ENCODE measurements at regions of chr1 and their contacts with region 1.

Region 1: DNA sequence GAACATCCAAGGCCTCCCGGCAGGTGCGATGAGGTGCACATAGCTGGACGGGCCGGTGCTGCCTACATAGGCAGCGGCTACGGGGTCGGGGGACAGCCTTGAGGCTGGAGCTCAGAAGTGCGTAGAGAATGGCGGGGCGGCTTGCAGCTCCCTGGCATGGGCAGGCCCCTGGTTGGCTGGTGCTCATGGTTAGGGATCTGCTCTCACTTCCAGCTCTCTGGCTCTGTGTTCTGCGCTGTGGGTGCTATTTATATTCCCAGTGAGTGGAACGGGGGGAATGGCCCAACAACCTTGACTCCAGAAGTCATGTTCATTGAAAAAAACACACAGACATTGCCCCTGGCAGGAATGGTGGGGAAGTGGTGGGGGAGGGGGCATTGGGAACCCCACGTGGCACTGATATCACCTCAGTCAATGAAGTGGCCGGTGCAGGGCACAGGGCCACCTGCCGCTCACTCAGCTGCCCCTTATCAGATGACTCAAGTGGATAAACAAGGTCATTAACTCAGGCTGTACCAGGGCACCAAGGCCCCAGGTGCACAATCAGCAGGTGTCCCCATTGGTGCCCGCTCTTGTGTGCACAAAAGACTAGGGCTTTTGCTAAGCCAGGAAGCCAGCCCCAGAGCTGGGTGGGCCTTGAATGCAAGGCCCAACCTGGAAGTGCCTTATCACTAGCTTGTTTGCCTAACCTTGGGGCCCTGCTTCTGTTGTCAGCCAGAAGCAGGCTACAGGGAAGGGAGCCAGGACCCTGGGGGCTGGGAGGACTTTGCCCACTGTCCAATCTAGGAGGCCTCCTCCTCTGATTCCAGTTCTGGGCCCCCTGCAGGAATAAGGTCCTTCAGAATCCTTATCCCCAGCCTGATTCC is at the start of gene NR0B2:
- DNase-seq: peak; percentile 100
- ATAC-seq: peak; percentile 84
- H3K4me3 ChIP-seq: peak within 1 kb of the TSS; percentile 75 to 97 (median 92)
- H3K27ac ChIP-seq: peak within 1 kb of the TSS; percentile 96
- H3K4me1 ChIP-seq: peaks cover 56% of the 10 kb centered on the region
- H3K27me3 ChIP-seq: no peaks in the 10 kb centered on the region; a peak in 1 of 5 replicates
- CTCF ChIP-seq: peak; percentile 41
- EP300 ChIP-seq: peak; percentile 79 to 96
- POLR2A ChIP-seq: peak; percentile 100
- RAD21 ChIP-seq: peak; percentile 29
- total RNA-seq, gene NR0B2: 71.6 and 72.5 TPM in 2 replicates

Region 2: DNA sequence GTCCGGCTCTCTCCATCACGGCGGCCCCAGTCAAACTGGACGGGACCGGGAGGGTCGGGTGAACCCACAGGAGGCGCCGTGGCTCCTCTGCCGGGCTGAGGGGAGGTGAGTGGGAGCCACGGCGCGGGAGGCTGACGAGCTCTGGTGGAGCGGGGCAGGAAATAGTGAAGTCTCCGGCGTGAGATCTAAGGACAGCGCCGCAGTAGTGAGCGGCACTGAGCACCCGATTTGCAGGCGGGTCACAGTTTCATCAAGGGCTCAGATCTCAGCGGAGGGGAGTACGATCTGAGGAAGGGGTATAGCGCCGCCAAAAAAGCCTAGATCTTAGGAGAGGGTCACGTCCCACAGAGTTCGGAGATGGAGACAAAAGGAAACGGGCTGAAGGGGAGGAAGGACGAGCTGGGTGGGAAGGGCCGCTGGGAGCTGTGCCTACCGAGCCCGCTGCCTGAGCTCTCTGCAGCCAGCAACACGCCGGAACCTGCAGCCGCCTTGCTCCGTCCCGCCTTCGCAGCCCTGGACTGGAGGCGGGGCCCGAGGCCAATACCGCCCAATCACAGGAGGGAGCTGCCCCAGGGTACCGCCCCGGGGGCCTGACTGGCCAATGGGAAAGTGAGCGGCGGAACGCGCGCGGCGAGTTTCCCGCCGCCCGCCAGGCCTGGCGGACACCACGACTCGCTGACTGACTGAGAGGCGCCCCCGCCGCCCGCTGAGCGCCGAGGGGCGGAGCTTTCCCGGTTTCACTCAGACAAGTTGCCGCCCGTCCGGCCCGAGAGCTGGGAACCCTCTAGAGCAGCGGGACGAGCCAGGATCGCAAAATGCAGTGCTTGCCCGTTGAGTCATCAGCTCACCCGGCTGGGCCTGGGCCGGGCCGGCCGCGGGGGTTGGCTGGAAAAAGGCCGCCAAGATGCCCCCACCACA is 49.1 kb before region 1 on chr1:
- CTCF ChIA-PET with region 1: no interaction called
- POLR2A ChIA-PET with region 1: interaction called, 25 read pairs
- in situ Hi-C with region 1: no loop called
- intact Hi-C with region 1: no loop called
- DNase-seq: peak; percentile 93
- ATAC-seq: peak; percentile 94
- H3K4me3 ChIP-seq: peak overlapping the region; percentile 70 to 79 (median 70)
- H3K27ac ChIP-seq: peak overlapping the region; percentile 79
- H3K4me1 ChIP-seq: peaks cover 63% of the 10 kb centered on the region
- H3K27me3 ChIP-seq: no peaks in the 10 kb centered on the region
- CTCF ChIP-seq: no peak; the same call in 1 of the 2 replicates
- EP300 ChIP-seq: no peak
- POLR2A ChIP-seq: peak; percentile 97
- RAD21 ChIP-seq: peak; percentile 7; the same call in 1 of the 2 replicates

Region 3: DNA sequence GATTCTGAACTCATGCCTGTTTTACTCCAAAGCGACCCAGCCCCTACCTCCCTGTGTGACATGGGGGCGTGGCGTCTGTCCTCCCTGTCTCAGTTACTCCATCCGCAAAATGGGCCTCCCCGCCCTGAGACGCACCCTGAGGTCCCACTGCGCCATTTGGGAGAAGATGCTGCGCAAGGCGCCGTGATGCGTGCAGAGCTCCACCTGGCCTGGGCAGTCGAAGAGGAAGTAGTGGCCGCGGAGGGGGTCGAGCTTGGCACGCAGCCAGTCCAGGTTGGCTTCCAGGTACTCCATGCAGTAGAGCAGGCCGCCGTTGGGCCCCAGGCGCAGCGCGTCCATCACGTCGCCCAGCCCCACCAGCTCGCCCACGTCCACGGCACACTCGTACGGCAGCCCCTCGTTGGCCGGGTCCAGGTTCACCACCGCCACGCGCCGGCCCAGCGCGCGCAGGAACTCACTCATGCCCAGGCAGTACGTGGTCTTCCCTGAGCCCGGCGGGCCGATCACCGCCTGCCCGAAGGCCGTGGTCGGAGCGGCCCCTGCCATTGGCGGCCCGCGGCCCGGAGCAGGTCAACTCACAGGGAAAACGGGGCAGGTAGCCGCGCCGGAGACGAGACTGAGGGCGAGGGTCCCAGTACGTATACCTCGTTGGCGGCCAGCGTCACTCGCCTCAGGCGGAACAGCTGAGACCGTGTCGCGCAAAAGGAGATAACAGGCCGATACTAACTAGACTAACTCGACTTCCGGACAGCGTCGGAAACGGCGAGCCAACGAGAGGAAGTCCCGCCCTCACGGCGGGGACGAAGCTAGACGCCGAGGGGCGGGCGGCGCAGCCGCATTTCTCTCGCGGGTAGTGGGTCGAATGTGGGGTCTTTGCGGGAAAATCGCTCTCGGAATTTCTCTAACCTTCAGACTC is 24.2 kb before region 1 on chr1 and contains the start of gene GPN2:
- CTCF ChIA-PET with region 1: no interaction called
- POLR2A ChIA-PET with region 1: interaction called, 65 read pairs
- in situ Hi-C with region 1: no loop called
- intact Hi-C with region 1: no loop called
- DNase-seq: peak; percentile 73
- ATAC-seq: peak; percentile 94
- H3K4me3 ChIP-seq: peak within 1 kb of the TSS; percentile 80 to 99 (median 95)
- H3K27ac ChIP-seq: peak within 1 kb of the TSS; percentile 84
- H3K4me1 ChIP-seq: peaks cover 32% of the 10 kb centered on the region
- H3K27me3 ChIP-seq: no peaks in the 10 kb centered on the region
- CTCF ChIP-seq: no peak; the same call in 1 of the 2 replicates
- EP300 ChIP-seq: no peak; a peak in 1 of 4 replicates
- POLR2A ChIP-seq: peak; percentile 79 to 85
- RAD21 ChIP-seq: no peak
- total RNA-seq, gene GPN2: 19.3 and 22.9 TPM in 2 replicates

Region 4: DNA sequence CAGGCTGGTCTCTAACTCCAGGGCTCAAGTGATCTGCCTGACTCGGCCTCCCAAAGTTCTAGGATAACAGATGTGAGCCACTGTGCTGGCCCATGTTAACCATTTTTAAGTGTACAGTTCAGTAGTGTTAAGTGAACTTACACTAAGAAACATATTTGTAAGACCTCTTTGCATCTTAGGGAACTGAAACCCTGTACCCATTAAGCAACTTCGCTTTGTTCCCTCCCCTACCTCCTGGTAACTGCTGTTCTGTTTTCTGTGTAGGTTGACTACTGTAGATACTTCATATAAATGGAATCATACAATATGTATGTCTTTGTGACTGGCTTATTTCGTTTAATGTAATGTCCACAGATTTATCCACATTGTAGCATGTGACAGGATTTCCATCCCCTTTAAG is 18.5 kb after region 1 on chr1:
- CTCF ChIA-PET with region 1: interaction called, 3 read pairs
- POLR2A ChIA-PET with region 1: interaction called, 371 read pairs
- in situ Hi-C with region 1: no loop called
- intact Hi-C with region 1: no loop called
- DNase-seq: no peak
- ATAC-seq: no peak
- H3K4me3 ChIP-seq: no peak overlapping the region
- H3K27ac ChIP-seq: no peak overlapping the region
- H3K4me1 ChIP-seq: peaks cover 14% of the 10 kb centered on the region
- H3K27me3 ChIP-seq: no peaks in the 10 kb centered on the region
- CTCF ChIP-seq: no peak
- EP300 ChIP-seq: no peak
- POLR2A ChIP-seq: no peak
- RAD21 ChIP-seq: no peak

Region 5: DNA sequence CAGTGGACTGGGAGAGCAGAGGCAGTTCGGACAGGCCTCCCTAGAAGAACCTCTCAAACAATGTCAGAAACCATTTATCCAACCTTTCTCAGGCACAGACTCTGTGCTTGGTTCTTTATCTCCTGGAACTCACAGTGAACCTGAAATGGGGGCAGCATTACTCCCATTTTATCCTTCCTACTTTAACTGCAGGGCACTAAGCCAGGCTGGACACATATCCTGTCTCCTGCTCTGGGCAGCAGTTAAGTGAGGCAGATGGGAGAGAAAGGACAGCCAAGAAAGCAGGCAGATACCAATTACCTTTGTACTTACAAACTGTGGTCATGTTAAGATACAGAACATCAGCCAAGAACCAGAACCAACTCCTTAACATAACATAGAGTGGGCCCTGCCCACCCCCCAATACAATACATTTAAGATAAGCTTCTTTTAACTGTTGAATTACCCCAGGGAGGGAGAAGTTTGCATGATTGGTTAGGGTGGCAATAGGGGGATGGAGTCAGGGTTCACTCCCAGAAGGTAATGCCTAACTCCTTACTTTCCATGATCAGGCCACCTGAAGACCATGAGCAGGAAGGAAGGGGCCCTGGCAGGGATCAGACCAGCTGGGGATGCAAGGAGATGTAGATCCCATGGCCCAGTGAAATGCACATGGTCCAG is 35.4 kb after region 1 on chr1:
- CTCF ChIA-PET with region 1: no interaction called
- POLR2A ChIA-PET with region 1: interaction called, 371 read pairs
- in situ Hi-C with region 1: no loop called
- intact Hi-C with region 1: loop called (anchors 1 kb)
- DNase-seq: no peak
- ATAC-seq: no peak
- H3K4me3 ChIP-seq: no peak overlapping the region
- H3K27ac ChIP-seq: peak overlapping the region; percentile 63
- H3K4me1 ChIP-seq: peaks cover 68% of the 10 kb centered on the region
- H3K27me3 ChIP-seq: no peaks in the 10 kb centered on the region
- CTCF ChIP-seq: no peak
- EP300 ChIP-seq: no peak
- POLR2A ChIP-seq: no peak
- RAD21 ChIP-seq: no peak

Region 6: DNA sequence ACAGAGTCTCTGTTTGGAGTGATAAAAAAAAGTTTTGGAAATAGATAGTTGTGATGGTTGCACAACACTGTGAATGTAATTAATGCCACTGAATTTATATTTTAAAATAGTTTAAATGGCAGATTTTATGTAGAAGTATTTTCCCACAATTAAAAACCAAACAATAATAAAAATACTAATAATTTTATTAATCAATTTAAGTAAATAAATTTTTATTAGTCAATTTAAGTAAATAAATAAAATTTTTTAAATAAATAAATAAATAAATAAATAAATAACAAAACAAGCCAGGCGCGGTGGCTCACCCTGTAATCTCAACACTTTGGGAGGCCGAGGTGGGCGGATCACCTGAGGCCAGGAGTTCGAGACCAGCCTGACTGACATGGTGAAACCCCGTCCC is 51.2 kb after region 1 on chr1:
- CTCF ChIA-PET with region 1: no interaction called
- POLR2A ChIA-PET with region 1: interaction called, 61 read pairs
- in situ Hi-C with region 1: no loop called
- intact Hi-C with region 1: no loop called
- DNase-seq: no peak
- ATAC-seq: no peak
- H3K4me3 ChIP-seq: no peak overlapping the region
- H3K27ac ChIP-seq: no peak overlapping the region
- H3K4me1 ChIP-seq: peaks cover 96% of the 10 kb centered on the region
- H3K27me3 ChIP-seq: 0 out of 5 replicates have a peak, but pooled peaks cover 0 to 4% of the 10 kb centered on the region in 2 experiments
- CTCF ChIP-seq: no peak
- EP300 ChIP-seq: no peak
- POLR2A ChIP-seq: no peak
- RAD21 ChIP-seq: no peak

Region 7: GRCh38 chr1:27037515-27037914 is 123.5 kb after region 1 on chr1:
- CTCF ChIA-PET with region 1: no interaction called
- POLR2A ChIA-PET with region 1: no interaction called
- in situ Hi-C with region 1: no loop called
- intact Hi-C with region 1: no loop called
- DNase-seq: no peak
- ATAC-seq: no peak
- H3K4me3 ChIP-seq: no peak overlapping the region
- H3K27ac ChIP-seq: no peak overlapping the region
- H3K4me1 ChIP-seq: peaks cover 12% of the 10 kb centered on the region; the same call in 1 of the 2 replicates
- H3K27me3 ChIP-seq: peaks cover 2 to 51% of the 10 kb centered on the region in 2 experiments; a peak in 3 of 5 replicates
- CTCF ChIP-seq: no peak
- EP300 ChIP-seq: no peak
- POLR2A ChIP-seq: no peak
- RAD21 ChIP-seq: no peak

Region 8: GRCh38 chr1:27057801-27058625 is 144.0 kb after region 1 on chr1:
- CTCF ChIA-PET with region 1: no interaction called
- POLR2A ChIA-PET with region 1: no interaction called
- in situ Hi-C with region 1: no loop called
- intact Hi-C with region 1: no loop called
- DNase-seq: no peak
- ATAC-seq: no peak; the same call in 2 of the 3 replicates
- H3K4me3 ChIP-seq: no peak overlapping the region
- H3K27ac ChIP-seq: no peak overlapping the region
- H3K4me1 ChIP-seq: no peaks in the 10 kb centered on the region
- H3K27me3 ChIP-seq: peaks cover 0 to 34% of the 10 kb centered on the region in 2 experiments
- CTCF ChIP-seq: no peak
- EP300 ChIP-seq: no peak
- POLR2A ChIP-seq: no peak
- RAD21 ChIP-seq: no peak

Region 9: DNA sequence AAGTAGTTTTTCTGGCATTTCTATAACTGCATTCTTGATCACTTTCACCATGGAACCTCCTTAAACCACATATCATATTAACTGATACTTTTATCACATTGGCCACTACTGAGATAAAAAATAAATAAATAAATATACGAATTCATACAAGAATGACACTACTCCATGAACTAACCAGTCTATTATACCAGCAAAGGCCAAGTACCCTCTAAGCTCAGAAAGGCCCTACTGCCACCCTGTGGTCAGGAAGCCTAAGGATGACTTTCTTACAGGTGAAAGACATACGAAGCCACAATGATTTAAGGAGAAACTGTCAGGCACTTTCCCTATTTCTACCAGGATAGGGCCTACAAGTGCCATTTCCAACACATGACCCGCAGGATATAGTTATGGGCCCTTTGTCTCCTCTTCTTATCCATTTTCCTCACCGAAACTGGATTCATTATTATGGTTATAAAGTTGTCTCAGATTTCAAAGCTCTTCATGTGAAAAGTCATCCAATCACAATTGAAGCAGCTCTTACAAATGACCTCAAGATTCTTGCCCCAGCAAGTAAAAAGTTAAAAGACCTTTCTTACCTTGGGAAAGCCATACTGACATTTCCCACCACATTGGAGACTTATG is 1294.9 kb after region 1 on chr1:
- CTCF ChIA-PET with region 1: no interaction called
- POLR2A ChIA-PET with region 1: no interaction called
- in situ Hi-C with region 1: no loop called
- intact Hi-C with region 1: no loop called
- DNase-seq: peak; percentile 58
- ATAC-seq: peak; percentile 72
- H3K4me3 ChIP-seq: no peak overlapping the region
- H3K27ac ChIP-seq: no peak overlapping the region
- H3K4me1 ChIP-seq: peaks cover 17% of the 10 kb centered on the region
- H3K27me3 ChIP-seq: no peaks in the 10 kb centered on the region
- CTCF ChIP-seq: peak; percentile 79
- EP300 ChIP-seq: no peak
- POLR2A ChIP-seq: no peak
- RAD21 ChIP-seq: peak; percentile 51; the same call in 1 of the 2 replicates